Naive thymus-derived CD4-positive, alpha-beta T cell (primary cell): ENCODE measurements at regions of chr12 and their contacts with region 1.

Region 1: GRCh38 chr12:121579981-121580868 is 598 bp downstream of the KDM2B start:
- DNase-seq: peak; percentile 61 to 79 (median 74)
- ATAC-seq: peak; percentile 76
- H3K4me3 ChIP-seq: peak overlapping the region; percentile 75
- H3K4me3 Mint-ChIP-seq: peak overlapping the region; percentile 92 to 100 (median 98)
- H3K27ac ChIP-seq: peak overlapping the region; percentile 91
- H3K27ac Mint-ChIP-seq: peak overlapping the region; percentile 92 to 99 (median 99)
- H3K4me1 ChIP-seq: peaks cover 25 to 28% of the 10 kb centered on the region in 2 donors
- H3K4me1 Mint-ChIP-seq: peaks cover 24 to 58% (median 49%) of the 10 kb centered on the region in 7 donors
- H3K27me3 ChIP-seq: no peaks in the 10 kb centered on the region
- H3K27me3 Mint-ChIP-seq: no peaks in the 10 kb centered on the region

Region 2: GRCh38 chr12:121499929-121500793 is 80.1 kb before region 1 on chr12:
- CTCF ChIA-PET with region 1: no interaction called
- POLR2A ChIA-PET with region 1: interaction called, 3 read pairs
- intact Hi-C with region 1: loop called in 1 of 2 experiments (anchors 1 kb)
- DNase-seq: peak; percentile 44 to 80 (median 68)
- ATAC-seq: peak; percentile 93
- H3K4me3 ChIP-seq: no peak overlapping the region
- H3K4me3 Mint-ChIP-seq: no peak overlapping the region
- H3K27ac ChIP-seq: no peak overlapping the region
- H3K27ac Mint-ChIP-seq: peak overlapping the region in 2 of 9 donors; percentile 8 to 32
- H3K4me1 ChIP-seq: peaks cover 0 to 11% of the 10 kb centered on the region in 2 donors
- H3K4me1 Mint-ChIP-seq: peaks cover 0 to 19% (median 13%) of the 10 kb centered on the region in 7 donors
- H3K27me3 ChIP-seq: no peaks in the 10 kb centered on the region
- H3K27me3 Mint-ChIP-seq: no peaks in the 10 kb centered on the region

Region 3: DNA sequence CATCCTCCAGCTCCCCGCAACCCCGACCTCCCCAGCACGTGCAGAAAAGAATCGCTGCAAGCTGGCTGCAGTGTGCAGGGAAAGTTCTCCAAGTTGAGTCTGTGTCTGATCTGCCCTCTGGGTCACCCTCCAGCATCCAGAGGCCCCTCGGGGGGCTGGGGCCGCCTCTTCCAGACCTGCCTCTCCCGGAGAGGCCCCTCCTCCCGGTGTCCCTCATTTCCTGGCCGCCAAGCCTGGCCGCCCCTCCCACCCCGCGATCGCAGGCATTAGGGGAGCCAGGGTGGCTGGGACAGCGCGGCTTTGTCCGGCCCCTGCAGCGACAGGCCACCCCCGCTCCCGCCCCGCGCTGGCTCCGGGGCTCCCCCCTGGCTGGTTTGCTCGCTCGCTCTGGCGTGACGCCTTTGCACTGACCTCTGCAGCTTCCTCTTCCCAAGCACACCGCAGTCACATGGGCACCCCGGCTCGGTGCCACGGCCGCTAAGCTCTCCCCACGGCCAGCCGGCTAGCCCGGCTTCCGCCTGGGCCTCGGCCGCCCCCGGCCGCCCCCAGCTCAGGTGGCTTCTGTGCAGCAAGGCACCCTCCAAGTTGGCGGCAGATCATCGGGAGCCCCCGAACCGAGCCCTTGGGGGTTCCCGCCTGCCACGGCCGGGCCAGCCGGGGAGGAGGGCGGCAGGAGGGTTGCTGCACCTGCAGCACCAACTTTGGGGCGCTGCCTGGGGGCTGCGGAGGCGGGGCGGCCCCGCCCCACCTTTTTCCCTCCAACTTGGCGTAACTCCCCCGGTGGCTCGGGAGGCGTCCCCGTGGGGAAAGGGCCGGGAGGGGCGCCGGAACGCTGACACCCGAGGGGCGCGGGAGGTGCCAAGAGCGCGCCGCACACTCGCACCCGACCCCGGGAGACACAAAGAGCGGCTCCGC is 43.1 kb before region 1 on chr12:
- CTCF ChIA-PET with region 1: no interaction called
- POLR2A ChIA-PET with region 1: interaction called, 5 read pairs
- intact Hi-C with region 1: loop called in 1 of 2 experiments (anchors 1 kb)
- DNase-seq: peak in 8 of 9 donors; percentile 20 to 70 (median 28)
- ATAC-seq: peak; percentile 51
- H3K4me3 ChIP-seq: peak overlapping the region; percentile 62
- H3K4me3 Mint-ChIP-seq: peak overlapping the region; percentile 51 to 91 (median 81)
- H3K27ac ChIP-seq: peak overlapping the region; percentile 74
- H3K27ac Mint-ChIP-seq: peak overlapping the region; percentile 43 to 97 (median 92)
- H3K4me1 ChIP-seq: peaks cover 29 to 36% of the 10 kb centered on the region in 2 donors
- H3K4me1 Mint-ChIP-seq: peaks cover 21 to 56% (median 44%) of the 10 kb centered on the region in 7 donors
- H3K27me3 ChIP-seq: no peaks in the 10 kb centered on the region
- H3K27me3 Mint-ChIP-seq: peaks cover 0 to 4% (median 0%) of the 10 kb centered on the region in 5 donors

Region 4: GRCh38 chr12:121568971-121569751 is 11.1 kb before region 1 on chr12:
- CTCF ChIA-PET with region 1: interaction called, 3 read pairs
- POLR2A ChIA-PET with region 1: interaction called, 16 read pairs
- intact Hi-C with region 1: no loop called
- DNase-seq: no peak
- ATAC-seq: peak; percentile 36
- H3K4me3 ChIP-seq: no peak overlapping the region
- H3K4me3 Mint-ChIP-seq: no peak overlapping the region
- H3K27ac ChIP-seq: no peak overlapping the region
- H3K27ac Mint-ChIP-seq: peak overlapping the region in 6 of 9 donors; percentile 4 to 61 (median 34)
- H3K4me1 ChIP-seq: no peaks in the 10 kb centered on the region
- H3K4me1 Mint-ChIP-seq: peaks cover 3 to 32% (median 28%) of the 10 kb centered on the region in 7 donors
- H3K27me3 ChIP-seq: no peaks in the 10 kb centered on the region
- H3K27me3 Mint-ChIP-seq: no peaks in the 10 kb centered on the region

Region 5: GRCh38 chr12:121688966-121689365 is 108.7 kb after region 1 on chr12:
- CTCF ChIA-PET with region 1: no interaction called
- POLR2A ChIA-PET with region 1: interaction called, 3 read pairs
- intact Hi-C with region 1: loop called in 1 of 2 experiments (anchors 1 kb)
- DNase-seq: no peak
- ATAC-seq: no peak
- H3K4me3 ChIP-seq: no peak overlapping the region
- H3K4me3 Mint-ChIP-seq: no peak overlapping the region
- H3K27ac ChIP-seq: no peak overlapping the region
- H3K27ac Mint-ChIP-seq: peak overlapping the region in 6 of 9 donors; percentile 8 to 36 (median 22)
- H3K4me1 ChIP-seq: peaks cover 0 to 4% of the 10 kb centered on the region in 2 donors
- H3K4me1 Mint-ChIP-seq: peaks cover 0 to 16% (median 10%) of the 10 kb centered on the region in 7 donors
- H3K27me3 ChIP-seq: no peaks in the 10 kb centered on the region
- H3K27me3 Mint-ChIP-seq: peaks cover 0 to 6% (median 0%) of the 10 kb centered on the region in 5 donors

Region 6: DNA sequence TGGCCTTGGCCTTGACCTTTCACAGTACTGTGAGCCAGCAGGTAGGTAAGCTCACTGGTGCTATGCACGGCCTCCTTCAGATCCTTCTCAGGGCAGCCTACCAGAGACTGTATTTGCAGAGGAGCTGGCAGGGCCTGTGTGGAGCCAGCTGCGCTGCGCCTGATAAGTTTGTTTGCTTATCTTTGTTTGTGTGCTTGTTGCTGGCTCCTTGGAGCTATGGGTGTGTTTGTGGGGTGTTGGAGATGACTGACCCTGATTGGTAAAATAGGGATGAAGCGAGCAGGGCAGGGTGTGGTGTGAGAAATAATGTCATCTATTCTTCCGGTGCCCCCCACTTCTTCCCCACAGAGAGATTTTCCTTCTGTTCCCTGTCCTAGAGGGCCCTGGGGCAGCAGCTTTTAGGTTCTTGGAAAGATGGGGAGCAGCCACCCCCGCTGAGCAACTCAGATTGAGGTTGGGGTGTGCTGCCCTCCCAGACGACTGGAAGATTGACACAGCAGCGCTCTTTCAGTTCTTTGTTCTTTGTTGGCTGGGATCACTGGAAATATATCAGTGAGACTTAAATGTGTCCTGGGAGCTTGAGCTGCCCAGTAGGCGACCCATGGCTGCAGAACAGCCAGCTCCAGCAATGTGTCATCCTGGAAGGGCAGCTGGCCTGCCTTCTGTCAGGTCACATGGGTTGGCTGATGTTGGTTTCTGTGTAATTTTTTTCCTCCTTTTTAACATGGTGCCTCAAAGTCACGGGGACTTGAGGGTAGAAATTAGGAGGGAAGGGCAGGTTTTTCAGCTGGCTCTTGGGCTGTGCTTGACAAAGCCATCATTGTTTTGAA is 517.9 kb after region 1 on chr12:
- CTCF ChIA-PET with region 1: no interaction called
- POLR2A ChIA-PET with region 1: no interaction called
- intact Hi-C with region 1: no loop called
- DNase-seq: no peak
- ATAC-seq: peak; percentile 28
- H3K4me3 ChIP-seq: no peak overlapping the region
- H3K4me3 Mint-ChIP-seq: peak overlapping the region in 9 of 10 donors; percentile 66 to 83 (median 76)
- H3K27ac ChIP-seq: peak overlapping the region; percentile 62
- H3K27ac Mint-ChIP-seq: peak overlapping the region in 7 of 9 donors; percentile 62 to 98 (median 94)
- H3K4me1 ChIP-seq: peaks cover 25 to 77% of the 10 kb centered on the region in 2 donors
- H3K4me1 Mint-ChIP-seq: peaks cover 49 to 73% (median 66%) of the 10 kb centered on the region in 7 donors
- H3K27me3 ChIP-seq: no peaks in the 10 kb centered on the region
- H3K27me3 Mint-ChIP-seq: no peaks in the 10 kb centered on the region

Region 7: GRCh38 chr12:122974274-122974891 is 1394.2 kb after region 1 on chr12:
- CTCF ChIA-PET with region 1: no interaction called
- POLR2A ChIA-PET with region 1: no interaction called
- intact Hi-C with region 1: loop called in 1 of 2 experiments (anchors 10 kb)
- DNase-seq: peak; percentile 92 to 98 (median 98)
- ATAC-seq: peak; percentile 92
- H3K4me3 ChIP-seq: peak overlapping the region; percentile 100
- H3K4me3 Mint-ChIP-seq: peak overlapping the region; percentile 92 to 99 (median 97)
- H3K27ac ChIP-seq: peak overlapping the region; percentile 98
- H3K27ac Mint-ChIP-seq: peak overlapping the region; percentile 99 to 100 (median 99)
- H3K4me1 ChIP-seq: peaks cover 18 to 23% of the 10 kb centered on the region in 2 donors
- H3K4me1 Mint-ChIP-seq: peaks cover 17 to 39% (median 30%) of the 10 kb centered on the region in 7 donors
- H3K27me3 ChIP-seq: no peaks in the 10 kb centered on the region
- H3K27me3 Mint-ChIP-seq: peaks cover 0 to 3% (median 0%) of the 10 kb centered on the region in 5 donors